ENCODE measurements at regions of chr7 and their contacts with region 1.

Region 1: GRCh38 chr7:131390275-131390674 is 62.6 kb downstream of the MKLN1 start:
- DNase-seq: no peak

Region 2: DNA sequence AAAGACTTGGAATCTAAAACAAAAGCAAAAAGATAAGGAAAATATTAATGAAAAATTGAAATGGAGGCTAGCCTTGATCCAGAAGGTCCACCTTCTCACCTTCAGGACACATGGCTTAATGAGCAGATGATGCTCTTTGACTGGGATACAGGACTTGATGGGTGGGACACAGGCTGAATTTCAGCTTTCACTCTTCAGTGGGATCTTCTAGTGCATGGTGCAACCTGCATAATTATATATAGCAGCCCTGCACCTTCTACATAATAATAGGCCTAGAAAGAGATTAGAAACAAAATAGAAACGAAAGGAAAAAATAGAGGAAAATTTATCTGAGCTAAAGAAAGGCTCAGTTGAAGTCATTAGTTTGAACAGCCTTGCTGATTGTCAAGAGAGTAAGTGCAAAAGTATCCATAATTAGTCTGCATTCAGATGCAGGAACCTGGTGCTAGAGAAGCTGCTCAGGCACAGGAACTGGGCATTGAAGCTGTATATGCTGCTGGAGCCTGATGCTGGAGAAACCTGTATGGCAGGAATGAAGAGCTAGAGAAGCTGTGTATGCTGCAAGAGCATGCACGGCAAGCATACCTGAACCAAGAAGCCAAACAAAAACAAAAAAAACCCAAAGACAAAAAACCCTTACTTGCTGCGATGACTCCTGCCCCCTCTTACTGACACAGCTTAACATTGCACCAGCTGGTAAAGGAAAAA is 43.2 kb before region 1 on chr7:
- intact Hi-C with region 1: loop called in 1 of 2 experiments (anchors 10 kb)
- DNase-seq: no peak